ENCODE measurements at regions of chr22 and their contacts with region 1.

Region 1: GRCh38 chr22:38766076-38766777 is 10.4 kb upstream of the SUN2 start:
- DNase-seq: peak in 6 of 9 donors; percentile 32 to 48 (median 38)
- ATAC-seq: peak; percentile 69
- H3K4me3 ChIP-seq: no peak overlapping the region
- H3K4me3 Mint-ChIP-seq: no peak overlapping the region
- H3K27ac ChIP-seq: no peak overlapping the region
- H3K27ac Mint-ChIP-seq: peak overlapping the region in 5 of 9 donors; percentile 12 to 42 (median 19)
- H3K4me1 ChIP-seq: no peaks in the 10 kb centered on the region
- H3K4me1 Mint-ChIP-seq: peaks cover 4 to 10% (median 9%) of the 10 kb centered on the region in 7 donors
- H3K27me3 ChIP-seq: no peaks in the 10 kb centered on the region
- H3K27me3 Mint-ChIP-seq: no peaks in the 10 kb centered on the region

Region 2: GRCh38 chr22:38638734-38639133 is 127.5 kb before region 1 on chr22:
- CTCF ChIA-PET with region 1: no interaction called
- POLR2A ChIA-PET with region 1: no interaction called
- intact Hi-C with region 1: no loop called
- DNase-seq: no peak
- ATAC-seq: no peak
- H3K4me3 ChIP-seq: no peak overlapping the region
- H3K4me3 Mint-ChIP-seq: no peak overlapping the region
- H3K27ac ChIP-seq: no peak overlapping the region
- H3K27ac Mint-ChIP-seq: no peak overlapping the region
- H3K4me1 ChIP-seq: no peaks in the 10 kb centered on the region
- H3K4me1 Mint-ChIP-seq: no peaks in the 10 kb centered on the region
- H3K27me3 ChIP-seq: no peaks in the 10 kb centered on the region
- H3K27me3 Mint-ChIP-seq: peaks cover 4 to 18% (median 10%) of the 10 kb centered on the region in 5 donors

Region 3: DNA sequence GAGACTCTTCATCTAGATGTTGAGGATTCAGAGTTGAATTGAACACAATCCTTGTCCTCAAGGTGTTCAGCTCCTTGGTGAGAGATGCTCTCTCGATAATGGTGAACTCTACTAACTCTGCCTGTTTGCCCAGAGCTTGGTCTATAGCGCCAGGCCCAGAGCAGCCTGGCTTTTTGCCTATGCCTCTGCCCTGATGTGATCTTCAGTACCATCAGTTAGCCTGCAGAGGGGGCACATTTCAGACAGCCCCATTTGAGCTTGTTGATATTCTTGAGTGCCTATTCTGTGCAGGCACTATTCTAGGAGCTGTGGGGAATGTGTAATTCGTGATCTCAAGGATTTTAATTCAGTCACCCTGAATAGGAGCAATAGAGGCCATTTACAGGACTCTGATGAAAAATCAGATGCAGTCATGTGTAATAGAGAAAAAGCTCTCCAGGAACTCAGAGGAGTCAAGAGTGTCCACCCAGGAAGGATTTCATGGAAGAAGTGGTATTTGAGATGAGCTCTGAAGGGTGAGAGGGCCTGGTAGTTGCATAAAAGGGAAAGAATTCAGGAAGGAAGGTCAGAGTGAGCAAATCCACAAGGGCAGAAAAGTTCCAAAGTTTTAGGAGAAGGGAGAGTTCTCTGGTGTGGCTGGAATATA is 41.2 kb before region 1 on chr22:
- CTCF ChIA-PET with region 1: interaction called, 12 read pairs
- POLR2A ChIA-PET with region 1: interaction called, 1,007 read pairs
- intact Hi-C with region 1: loop called in 1 of 2 experiments (anchors 1 kb)
- DNase-seq: peak in 7 of 9 donors; percentile 33 to 63 (median 50)
- ATAC-seq: peak; percentile 86
- H3K4me3 ChIP-seq: no peak overlapping the region
- H3K4me3 Mint-ChIP-seq: peak overlapping the region in 1 of 10 donors; percentile 15
- H3K27ac ChIP-seq: peak overlapping the region; percentile 8
- H3K27ac Mint-ChIP-seq: peak overlapping the region in 8 of 9 donors; percentile 50 to 91 (median 76)
- H3K4me1 ChIP-seq: no peaks in the 10 kb centered on the region
- H3K4me1 Mint-ChIP-seq: peaks cover 5 to 25% (median 11%) of the 10 kb centered on the region in 7 donors
- H3K27me3 ChIP-seq: no peaks in the 10 kb centered on the region
- H3K27me3 Mint-ChIP-seq: no peaks in the 10 kb centered on the region

Region 4: DNA sequence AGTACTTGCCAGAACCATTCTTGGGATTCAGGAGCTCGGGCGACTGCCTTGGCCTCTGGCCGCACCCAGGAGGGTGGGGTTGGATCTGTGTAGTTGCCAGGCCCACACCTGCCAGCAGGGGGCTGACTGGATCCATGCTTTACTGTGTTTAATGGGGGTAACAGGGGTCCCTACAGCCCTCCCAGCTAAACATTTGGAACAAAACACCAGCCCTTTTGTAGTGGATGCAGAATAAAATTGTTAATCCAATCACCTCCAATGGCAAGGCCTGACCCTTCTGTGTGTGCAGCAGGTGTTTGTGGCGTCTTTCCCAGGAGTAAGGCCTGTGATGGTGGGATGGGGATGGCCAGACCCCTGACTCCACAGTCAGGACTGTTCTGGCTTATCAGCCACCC is 32.9 kb before region 1 on chr22:
- CTCF ChIA-PET with region 1: interaction called, 21 read pairs
- POLR2A ChIA-PET with region 1: interaction called, 1,007 read pairs
- intact Hi-C with region 1: loop called in 1 of 2 experiments (anchors 1 kb)
- DNase-seq: peak in 5 of 9 donors; percentile 37 to 55 (median 49)
- ATAC-seq: peak; percentile 67
- H3K4me3 ChIP-seq: no peak overlapping the region
- H3K4me3 Mint-ChIP-seq: peak overlapping the region in 4 of 10 donors; percentile 11 to 51 (median 40)
- H3K27ac ChIP-seq: peak overlapping the region; percentile 54
- H3K27ac Mint-ChIP-seq: peak overlapping the region; percentile 76 to 91 (median 87)
- H3K4me1 ChIP-seq: peaks cover 15 to 18% of the 10 kb centered on the region in 2 donors
- H3K4me1 Mint-ChIP-seq: peaks cover 25 to 63% (median 53%) of the 10 kb centered on the region in 7 donors
- H3K27me3 ChIP-seq: no peaks in the 10 kb centered on the region
- H3K27me3 Mint-ChIP-seq: no peaks in the 10 kb centered on the region

Region 5: GRCh38 chr22:38901111-38901641 is 134.9 kb after region 1 on chr22:
- CTCF ChIA-PET with region 1: no interaction called
- POLR2A ChIA-PET with region 1: no interaction called
- intact Hi-C with region 1: no loop called
- DNase-seq: no peak
- ATAC-seq: no peak
- H3K4me3 ChIP-seq: no peak overlapping the region
- H3K4me3 Mint-ChIP-seq: peak overlapping the region in 6 of 10 donors; percentile 3 to 69 (median 20)
- H3K27ac ChIP-seq: no peak overlapping the region
- H3K27ac Mint-ChIP-seq: no peak overlapping the region
- H3K4me1 ChIP-seq: peaks cover 0 to 6% of the 10 kb centered on the region in 2 donors
- H3K4me1 Mint-ChIP-seq: peaks cover 0 to 17% (median 13%) of the 10 kb centered on the region in 7 donors
- H3K27me3 ChIP-seq: no peaks in the 10 kb centered on the region
- H3K27me3 Mint-ChIP-seq: peaks cover 4 to 45% (median 8%) of the 10 kb centered on the region in 5 donors

Measured in naive thymus-derived CD4-positive, alpha-beta T cell (primary cell).